Caco-2 (cell line): ENCODE measurements at regions of chrX and their contacts with region 1.

Region 1: DNA sequence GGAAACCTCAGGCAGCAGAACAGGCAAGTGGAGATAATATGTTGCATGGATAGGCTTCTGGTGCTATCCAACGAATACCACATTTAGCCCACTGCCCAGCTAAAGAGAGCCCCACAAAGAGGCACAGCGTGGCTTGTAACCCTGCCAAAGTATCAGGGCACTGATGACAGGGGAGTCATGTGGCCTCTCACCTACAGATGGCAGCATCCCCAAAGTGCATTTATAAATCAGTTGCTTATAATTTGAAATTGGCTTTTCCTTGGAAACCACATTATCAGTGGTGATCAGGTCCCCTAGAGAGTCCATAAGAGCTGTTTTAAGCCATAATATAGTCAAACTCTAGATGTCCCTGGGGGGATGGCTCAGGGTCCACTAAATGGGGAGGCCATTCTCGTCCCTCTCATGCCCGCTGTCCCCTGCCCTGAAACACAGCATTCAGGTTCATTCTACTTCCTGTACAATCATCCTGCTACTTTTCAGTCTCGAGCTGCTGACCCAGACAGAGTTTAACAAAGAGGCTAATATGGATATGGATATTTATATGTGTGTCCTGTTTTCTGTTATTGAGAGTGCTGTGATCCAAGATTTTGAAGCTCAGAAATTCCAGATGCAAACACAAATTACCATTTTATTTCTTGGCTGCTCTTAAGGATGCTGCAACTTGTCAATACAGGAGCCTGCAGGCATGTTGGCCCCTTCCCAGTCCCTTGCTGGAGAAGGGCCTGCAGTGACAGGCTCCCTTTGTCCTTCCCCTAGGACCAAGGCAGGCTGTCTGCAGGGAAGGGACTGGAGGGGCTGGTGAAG is 28.5 kb downstream of the SRPX start:
- DNase-seq: no peak
- H3K4me3 ChIP-seq: no peak overlapping the region
- H3K4me3 Mint-ChIP-seq: no peak overlapping the region
- H3K27ac Mint-ChIP-seq: no peak overlapping the region
- H3K4me1 ChIP-seq: no peaks in the 10 kb centered on the region
- H3K4me1 Mint-ChIP-seq: no peaks in the 10 kb centered on the region
- H3K27me3 ChIP-seq: no peaks in the 10 kb centered on the region
- H3K27me3 Mint-ChIP-seq: no peaks in the 10 kb centered on the region
- CTCF ChIP-seq: peak; percentile 38 to 48

Region 2: DNA sequence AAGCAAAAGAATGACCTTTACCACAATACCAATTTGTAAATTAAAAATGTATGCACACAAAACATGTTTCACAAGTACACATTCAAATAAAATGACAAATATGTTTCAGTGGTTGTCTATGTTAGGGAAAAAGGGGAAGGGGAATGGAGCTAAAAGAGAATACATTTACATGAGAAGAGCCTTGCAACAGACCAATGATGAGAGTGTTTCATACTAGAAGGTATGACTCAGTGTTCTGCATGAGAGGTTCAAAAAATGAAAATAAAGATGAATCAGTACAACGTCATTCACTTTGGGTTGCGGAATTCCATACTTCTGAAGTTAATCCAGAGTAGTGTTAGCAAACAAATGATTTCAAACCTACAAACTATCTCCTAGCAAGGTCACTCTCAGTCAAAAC is 83.4 kb after region 1 on chrX:
- CTCF ChIA-PET with region 1: no interaction called
- POLR2A ChIA-PET with region 1: no interaction called
- intact Hi-C with region 1: loop called (anchors 10 kb)
- DNase-seq: no peak
- H3K4me3 ChIP-seq: no peak overlapping the region
- H3K4me3 Mint-ChIP-seq: no peak overlapping the region
- H3K27ac Mint-ChIP-seq: no peak overlapping the region
- H3K4me1 ChIP-seq: peaks cover 26% of the 10 kb centered on the region
- H3K4me1 Mint-ChIP-seq: peaks cover 15% of the 10 kb centered on the region
- H3K27me3 ChIP-seq: no peaks in the 10 kb centered on the region
- H3K27me3 Mint-ChIP-seq: no peaks in the 10 kb centered on the region
- CTCF ChIP-seq: no peak

Region 3: DNA sequence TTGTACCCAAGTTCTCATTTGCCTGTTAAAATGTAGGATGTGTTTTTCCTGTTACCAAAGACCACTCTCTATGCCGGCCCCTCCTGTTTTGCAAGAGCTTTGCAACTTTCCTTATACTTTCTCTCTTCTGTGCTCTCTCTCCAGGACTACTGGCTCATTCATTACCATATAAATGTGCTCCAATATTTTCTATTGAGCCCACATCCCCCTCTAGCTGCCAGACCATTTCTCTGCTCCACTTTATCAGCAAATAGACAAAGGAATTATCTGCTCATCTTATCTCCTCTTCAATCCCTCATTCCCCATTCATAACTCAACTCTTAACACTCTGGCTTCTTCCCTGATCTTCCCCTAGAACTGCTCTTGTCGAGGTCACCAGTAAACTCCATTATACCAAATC is 101.5 kb after region 1 on chrX:
- CTCF ChIA-PET with region 1: no interaction called
- POLR2A ChIA-PET with region 1: no interaction called
- intact Hi-C with region 1: loop called (anchors 1 kb)
- DNase-seq: no peak
- H3K4me3 ChIP-seq: no peak overlapping the region
- H3K4me3 Mint-ChIP-seq: no peak overlapping the region
- H3K27ac Mint-ChIP-seq: no peak overlapping the region
- H3K4me1 ChIP-seq: no peaks in the 10 kb centered on the region
- H3K4me1 Mint-ChIP-seq: no peaks in the 10 kb centered on the region
- H3K27me3 ChIP-seq: no peaks in the 10 kb centered on the region
- H3K27me3 Mint-ChIP-seq: no peaks in the 10 kb centered on the region
- CTCF ChIP-seq: no peak